ENCODE measurements at regions of chr12 and their contacts with region 1.

Region 1: DNA sequence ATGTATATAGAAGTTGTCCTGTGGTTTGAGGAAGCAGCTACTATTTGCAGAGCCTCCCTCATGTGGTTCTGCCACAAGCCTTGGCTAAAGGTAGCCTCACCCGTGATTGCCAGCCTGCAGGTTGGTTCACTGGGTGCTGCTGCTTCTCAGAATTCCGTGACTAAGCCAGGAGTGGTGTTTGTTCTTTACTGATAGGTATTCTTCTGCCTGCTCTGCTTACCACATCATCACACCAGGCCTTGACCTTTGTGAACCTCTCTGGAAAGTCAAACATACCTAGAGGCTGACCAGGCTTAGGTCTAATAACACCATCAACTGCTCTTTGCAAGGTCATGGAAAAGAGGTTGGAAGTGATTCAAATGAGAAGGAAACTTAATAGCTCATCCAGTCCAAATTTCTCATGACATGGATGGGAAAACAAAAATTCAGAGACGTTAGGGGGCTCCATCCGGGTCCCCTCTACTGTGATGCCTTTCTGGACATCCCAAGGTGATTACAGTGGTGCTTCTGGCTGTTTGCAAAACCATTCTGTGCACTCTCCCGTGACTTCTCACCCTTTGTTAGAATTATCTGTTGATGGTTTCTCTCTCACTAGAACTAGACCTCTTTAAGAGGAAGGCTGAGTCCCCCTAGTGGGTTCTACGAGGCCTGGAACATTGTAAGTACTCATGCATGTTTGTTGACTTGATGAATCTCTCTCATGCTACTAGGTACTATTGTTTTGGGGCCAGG is 8.5 kb upstream of the SOCS2 start:
- DNase-seq: no peak
- H3K4me3 ChIP-seq: no peak overlapping the region
- H3K27ac ChIP-seq: no peak overlapping the region
- H3K4me1 ChIP-seq: peaks cover 0 to under 1% (median 0%) of the 10 kb centered on the region in 4 donors
- H3K27me3 ChIP-seq: no peaks in the 10 kb centered on the region
- CTCF ChIP-seq: no peak

Region 2: GRCh38 chr12:93378373-93379325 is 185.3 kb before region 1 on chr12:
- intact Hi-C with region 1: no loop called
- DNase-seq: peak; percentile 51 to 73
- H3K4me3 ChIP-seq: peak overlapping the region; percentile 84 to 87
- H3K27ac ChIP-seq: peak overlapping the region; percentile 93 to 96
- H3K4me1 ChIP-seq: peaks cover 0 to 48% (median 27%) of the 10 kb centered on the region in 4 donors
- H3K27me3 ChIP-seq: no peaks in the 10 kb centered on the region
- CTCF ChIP-seq: no peak

Region 3: DNA sequence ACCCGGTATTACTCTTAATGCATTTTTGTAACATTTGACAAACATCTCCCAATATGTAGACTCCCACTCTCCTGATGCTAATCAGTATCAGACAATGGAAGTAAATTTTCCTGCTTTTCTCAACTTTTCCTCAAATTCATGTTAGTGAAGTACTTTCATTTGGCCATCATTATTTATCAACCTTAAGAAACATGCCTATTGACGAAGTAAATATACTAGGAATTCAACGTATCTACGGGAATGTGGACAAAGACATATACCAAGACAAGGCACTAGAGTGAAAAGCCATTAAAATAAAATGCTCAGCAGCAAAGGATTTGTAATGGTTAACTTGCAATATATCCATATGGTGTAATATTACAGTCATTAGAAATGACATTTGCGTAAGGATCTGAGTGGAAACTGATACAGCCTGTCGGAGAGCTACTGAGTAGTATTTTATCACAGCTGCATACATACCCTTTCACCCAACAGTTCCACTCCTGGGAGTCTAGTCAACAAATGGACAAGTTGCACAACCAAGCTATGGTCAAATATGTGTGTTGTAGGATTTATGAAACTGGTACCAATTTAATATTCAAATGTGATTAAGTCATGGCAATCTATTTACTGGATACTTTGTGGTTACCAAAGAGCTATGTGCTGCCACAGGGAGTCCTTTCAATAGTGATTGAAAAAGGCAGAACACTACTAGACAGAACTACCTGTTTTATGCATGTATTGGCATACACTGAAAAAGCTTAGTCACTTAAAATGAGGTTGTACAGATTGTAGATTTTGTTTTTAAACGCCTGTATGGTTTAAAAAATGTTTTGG is 159.8 kb before region 1 on chr12:
- intact Hi-C with region 1: no loop called
- DNase-seq: no peak
- H3K4me3 ChIP-seq: no peak overlapping the region
- H3K27ac ChIP-seq: peak overlapping the region in 1 of 2 donors; percentile 23
- H3K4me1 ChIP-seq: peaks cover 0 to 13% (median 0%) of the 10 kb centered on the region in 4 donors
- H3K27me3 ChIP-seq: no peaks in the 10 kb centered on the region
- CTCF ChIP-seq: no peak

Region 4: DNA sequence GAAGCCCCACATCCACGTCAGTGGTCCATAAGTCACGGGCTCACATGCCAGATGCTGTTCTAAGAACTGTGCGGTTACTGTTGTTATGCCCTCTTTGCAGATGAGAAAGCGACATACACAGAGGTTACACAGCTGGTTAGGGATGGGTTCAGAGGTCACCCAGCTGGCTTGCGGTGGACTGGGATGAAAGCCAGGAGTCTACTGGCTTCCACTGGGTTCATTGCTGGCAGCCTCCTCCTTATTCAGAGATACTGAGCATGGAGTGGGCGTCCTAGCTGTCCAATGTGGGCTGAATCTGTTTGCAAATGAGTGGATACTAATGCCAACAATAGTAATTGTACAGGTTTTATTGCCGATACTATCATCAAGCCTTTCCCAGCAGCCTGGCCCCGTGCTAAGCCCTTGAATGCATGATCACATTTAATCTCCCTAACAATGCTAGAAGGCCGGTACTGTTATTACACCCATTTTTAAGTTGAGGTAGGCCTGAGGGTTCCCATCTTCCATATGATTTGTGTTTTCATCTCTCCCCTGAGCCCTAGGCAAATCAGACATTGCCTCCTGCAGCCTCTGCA is 713.5 kb after region 1 on chr12:
- intact Hi-C with region 1: loop called (anchors 5 kb)
- DNase-seq: no peak
- H3K4me3 ChIP-seq: no peak overlapping the region
- H3K27ac ChIP-seq: no peak overlapping the region
- H3K4me1 ChIP-seq: no peaks in the 10 kb centered on the region
- H3K27me3 ChIP-seq: no peaks in the 10 kb centered on the region
- CTCF ChIP-seq: no peak